ENCODE measurements at regions of chr6 and their contacts with region 1.

Region 1: DNA sequence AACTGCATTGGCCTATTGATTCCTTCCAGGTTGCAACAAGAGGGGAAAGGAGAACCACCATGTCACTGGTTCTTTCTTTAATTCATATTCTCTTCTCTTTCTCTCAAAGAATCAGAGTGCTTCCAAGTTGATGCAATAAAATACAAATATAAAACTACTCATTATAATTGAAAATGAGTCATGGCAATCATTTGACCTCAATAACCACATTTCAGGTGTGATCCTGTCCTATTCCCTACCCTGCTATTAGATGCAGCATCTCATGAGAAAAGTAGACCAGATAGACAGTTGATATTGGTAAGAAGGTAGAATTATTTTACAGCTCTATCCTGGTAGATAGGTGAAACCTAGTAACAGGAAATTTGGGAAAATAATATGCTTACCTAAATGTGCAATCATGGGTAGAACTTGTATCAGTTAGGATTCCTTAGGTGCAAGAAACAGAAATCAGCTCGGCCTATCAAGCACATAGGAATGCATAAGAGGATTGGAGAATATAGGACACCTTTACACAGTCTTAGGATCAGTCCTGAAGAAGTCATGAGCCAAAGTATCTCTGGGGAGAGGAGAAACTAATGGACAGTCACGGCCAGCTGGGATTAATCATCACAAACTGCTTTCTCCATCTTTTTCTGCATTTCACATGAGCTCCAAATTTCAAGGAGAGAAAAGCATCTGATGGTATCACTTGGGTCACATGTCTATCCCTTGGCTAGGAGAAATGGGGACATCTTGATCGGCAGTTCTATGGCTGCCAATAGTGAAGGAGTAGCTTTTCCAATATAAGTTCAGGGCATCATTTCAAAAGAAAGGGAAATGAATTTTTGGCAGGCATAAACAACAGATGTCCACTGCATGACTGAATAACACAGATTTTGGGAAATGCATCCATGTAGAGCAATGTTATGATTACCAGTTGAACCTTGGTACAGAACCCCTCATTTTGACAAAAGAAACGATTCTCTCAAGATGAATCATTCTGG is 19.3 kb upstream of the RNF146 start:
- H3K4me3 ChIP-seq: no peak overlapping the region
- H3K27ac ChIP-seq: no peak overlapping the region
- H3K4me1 ChIP-seq: no peaks in the 10 kb centered on the region
- CTCF ChIP-seq: no peak

Region 2: DNA sequence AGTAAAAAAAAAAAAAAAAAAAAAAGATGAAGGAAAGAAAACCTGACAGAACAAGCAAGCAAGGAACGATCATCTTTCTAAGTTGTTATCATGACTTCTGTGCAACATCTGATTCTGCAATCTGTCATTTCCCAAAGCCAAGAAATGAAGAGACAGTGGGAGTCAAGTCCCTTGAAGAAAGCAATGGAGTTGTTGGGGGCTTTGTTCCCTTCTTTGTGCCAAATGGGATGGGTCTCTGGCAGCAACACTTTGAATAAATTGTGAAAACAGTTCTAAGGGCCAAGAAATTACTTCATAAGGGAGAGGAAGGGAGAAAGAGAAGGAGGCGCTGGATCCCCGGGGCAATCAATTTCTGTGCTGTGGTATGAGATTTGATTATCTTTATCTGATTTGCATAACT is 162.2 kb before region 1 on chr6:
- CTCF ChIA-PET with region 1: no interaction called
- POLR2A ChIA-PET with region 1: no interaction called
- H3K4me3 ChIP-seq: no peak overlapping the region
- H3K27ac ChIP-seq: no peak overlapping the region
- H3K4me1 ChIP-seq: no peaks in the 10 kb centered on the region
- CTCF ChIP-seq: no peak

Region 3: DNA sequence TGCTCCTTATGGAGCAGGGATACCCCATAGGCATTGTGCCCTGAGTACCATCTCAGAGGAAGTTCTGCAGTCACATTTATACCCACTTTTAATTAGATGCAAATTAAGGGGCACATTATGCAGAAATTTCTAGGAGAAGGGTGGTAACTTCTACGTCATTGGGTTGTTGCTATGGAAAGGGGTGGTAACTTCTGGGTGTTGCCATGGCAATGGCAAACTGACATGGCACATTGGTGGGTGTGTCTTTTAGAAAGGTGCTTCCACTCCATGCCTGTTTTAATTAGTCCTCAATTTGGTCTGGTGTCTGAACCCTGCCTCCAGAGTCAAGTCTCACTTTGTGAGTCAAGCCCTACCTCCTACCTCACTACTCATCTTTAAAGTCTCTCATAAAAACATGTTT is 86.9 kb before region 1 on chr6:
- CTCF ChIA-PET with region 1: no interaction called
- POLR2A ChIA-PET with region 1: no interaction called
- H3K4me3 ChIP-seq: no peak overlapping the region
- H3K27ac ChIP-seq: no peak overlapping the region
- H3K4me1 ChIP-seq: no peaks in the 10 kb centered on the region
- CTCF ChIP-seq: no peak

Region 4: GRCh38 chr6:127266178-127266891 is 18.9 kb after region 1 on chr6 and contains the start of gene RNF146:
- CTCF ChIA-PET with region 1: interaction called, 11 read pairs
- POLR2A ChIA-PET with region 1: interaction called, 3 read pairs
- H3K4me3 ChIP-seq: peak within 1 kb of the TSS; percentile 100
- H3K27ac ChIP-seq: peak within 1 kb of the TSS; percentile 89
- H3K4me1 ChIP-seq: peaks cover 6% of the 10 kb centered on the region; the same call in 1 of the 2 replicates
- CTCF ChIP-seq: peak; percentile 91

Region 5: GRCh38 chr6:127342946-127343808 is 95.8 kb after region 1 on chr6 and contains the start of gene ECHDC1:
- CTCF ChIA-PET with region 1: no interaction called
- POLR2A ChIA-PET with region 1: no interaction called
- H3K4me3 ChIP-seq: peak within 1 kb of the TSS; percentile 66
- H3K27ac ChIP-seq: peak within 1 kb of the TSS; percentile 71
- H3K4me1 ChIP-seq: peaks cover 20% of the 10 kb centered on the region
- CTCF ChIP-seq: no peak; the same call in 1 of the 2 replicates